ENCODE measurements at regions of chr5 and their contacts with region 1.

Region 1: GRCh38 chr5:14108170-14108996 is 34.8 kb upstream of the TRIO start:
- DNase-seq: peak in 7 of 14 experiments; percentile 1 to 65 (median 34)
- ATAC-seq: peak; percentile 67
- H3K4me3 ChIP-seq: no peak overlapping the region
- H3K4me3 Mint-ChIP-seq: no peak overlapping the region
- H3K27ac ChIP-seq: no peak overlapping the region
- H3K27ac Mint-ChIP-seq: no peak overlapping the region
- H3K4me1 ChIP-seq: no peaks in the 10 kb centered on the region
- H3K4me1 Mint-ChIP-seq: peaks cover 10% of the 10 kb centered on the region
- H3K27me3 ChIP-seq: no peaks in the 10 kb centered on the region
- H3K27me3 Mint-ChIP-seq: peaks cover 12% of the 10 kb centered on the region
- CTCF ChIP-seq: peak; percentile 57

Region 2: GRCh38 chr5:14071433-14071832 is 37.0 kb before region 1 on chr5:
- CTCF ChIA-PET with region 1: no interaction called
- POLR2A ChIA-PET with region 1: no interaction called
- intact Hi-C with region 1: no loop called
- DNase-seq: no peak
- ATAC-seq: no peak
- H3K4me3 ChIP-seq: no peak overlapping the region
- H3K4me3 Mint-ChIP-seq: no peak overlapping the region
- H3K27ac ChIP-seq: no peak overlapping the region
- H3K27ac Mint-ChIP-seq: no peak overlapping the region
- H3K4me1 ChIP-seq: no peaks in the 10 kb centered on the region
- H3K4me1 Mint-ChIP-seq: no peaks in the 10 kb centered on the region
- H3K27me3 ChIP-seq: no peaks in the 10 kb centered on the region
- H3K27me3 Mint-ChIP-seq: peaks cover 6% of the 10 kb centered on the region
- CTCF ChIP-seq: no peak

Region 3: DNA sequence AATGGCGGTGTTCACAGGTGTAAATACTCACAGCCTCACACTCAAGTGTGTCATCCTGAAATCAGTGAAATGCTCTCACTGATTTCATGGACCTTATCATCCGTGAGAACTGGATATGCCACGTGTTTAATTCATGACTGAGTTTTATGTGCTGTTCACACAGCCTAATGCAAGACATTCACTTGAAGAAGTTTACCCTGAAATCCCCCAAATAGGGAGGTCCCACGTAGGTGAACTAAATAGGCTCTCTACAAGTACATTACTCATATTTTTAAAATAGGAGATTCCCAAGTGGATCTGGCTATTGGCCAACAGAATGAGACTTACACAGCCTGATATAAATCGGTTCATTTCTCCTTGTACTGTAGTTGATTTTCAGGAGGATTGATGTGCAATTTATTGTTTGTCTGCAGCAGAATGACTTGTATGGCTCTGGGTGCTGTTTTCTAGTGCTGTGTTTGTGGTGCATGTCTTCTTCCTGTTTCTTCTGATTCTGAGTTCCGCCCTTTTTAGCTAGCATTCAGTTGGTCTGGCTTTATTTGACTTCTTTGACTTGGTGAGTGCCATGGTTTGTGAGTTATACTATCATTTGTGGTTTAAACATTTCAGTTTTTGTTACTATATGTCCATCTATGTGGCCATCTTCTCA is 59.9 kb after region 1 on chr5:
- CTCF ChIA-PET with region 1: no interaction called
- POLR2A ChIA-PET with region 1: no interaction called
- intact Hi-C with region 1: no loop called
- DNase-seq: peak in 2 of 14 experiments; percentile 19 to 23
- ATAC-seq: no peak
- H3K4me3 ChIP-seq: no peak overlapping the region
- H3K4me3 Mint-ChIP-seq: no peak overlapping the region
- H3K27ac ChIP-seq: no peak overlapping the region
- H3K27ac Mint-ChIP-seq: no peak overlapping the region
- H3K4me1 ChIP-seq: peaks cover 2% of the 10 kb centered on the region
- H3K4me1 Mint-ChIP-seq: peaks cover 13% of the 10 kb centered on the region
- H3K27me3 ChIP-seq: no peaks in the 10 kb centered on the region
- H3K27me3 Mint-ChIP-seq: peaks cover 15% of the 10 kb centered on the region
- CTCF ChIP-seq: no peak

Region 4: DNA sequence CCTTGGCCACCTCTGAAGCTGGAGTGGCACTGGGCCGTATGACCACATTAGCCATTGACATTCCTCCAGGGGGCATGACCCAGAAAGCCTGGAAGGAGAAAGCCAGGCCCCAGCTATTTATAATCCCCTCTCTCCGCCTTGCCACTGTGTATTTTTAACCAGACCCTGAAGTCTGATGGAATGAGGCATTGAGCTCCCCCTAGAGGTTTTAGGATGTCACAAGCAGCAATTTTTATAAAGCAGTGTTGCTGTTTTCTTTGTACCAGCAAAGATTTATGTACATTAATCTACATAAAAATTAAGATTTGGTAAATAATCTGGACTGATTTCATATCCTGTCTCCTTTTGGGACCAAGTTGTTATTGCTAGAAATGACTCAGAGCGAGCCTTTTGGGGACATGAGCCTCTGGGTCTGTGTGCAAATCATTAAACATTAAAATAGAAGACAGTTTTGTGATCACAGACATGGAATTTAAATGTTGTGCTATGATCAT is 161.9 kb after region 1 on chr5:
- CTCF ChIA-PET with region 1: no interaction called
- POLR2A ChIA-PET with region 1: no interaction called
- intact Hi-C with region 1: loop called (anchors 1 to 2 kb)
- DNase-seq: peak in 3 of 14 experiments; percentile 14 to 44 (median 32)
- ATAC-seq: no peak
- H3K4me3 ChIP-seq: no peak overlapping the region
- H3K4me3 Mint-ChIP-seq: no peak overlapping the region
- H3K27ac ChIP-seq: no peak overlapping the region
- H3K27ac Mint-ChIP-seq: no peak overlapping the region
- H3K4me1 ChIP-seq: no peaks in the 10 kb centered on the region
- H3K4me1 Mint-ChIP-seq: no peaks in the 10 kb centered on the region
- H3K27me3 ChIP-seq: peaks cover 0 to 18% of the 10 kb centered on the region in 2 experiments
- H3K27me3 Mint-ChIP-seq: peaks cover 22% of the 10 kb centered on the region
- CTCF ChIP-seq: peak; percentile 56